Breast epithelium (tissue), 4 donors: ENCODE measurements at regions of chr12 and their contacts with region 1.

Region 1: DNA sequence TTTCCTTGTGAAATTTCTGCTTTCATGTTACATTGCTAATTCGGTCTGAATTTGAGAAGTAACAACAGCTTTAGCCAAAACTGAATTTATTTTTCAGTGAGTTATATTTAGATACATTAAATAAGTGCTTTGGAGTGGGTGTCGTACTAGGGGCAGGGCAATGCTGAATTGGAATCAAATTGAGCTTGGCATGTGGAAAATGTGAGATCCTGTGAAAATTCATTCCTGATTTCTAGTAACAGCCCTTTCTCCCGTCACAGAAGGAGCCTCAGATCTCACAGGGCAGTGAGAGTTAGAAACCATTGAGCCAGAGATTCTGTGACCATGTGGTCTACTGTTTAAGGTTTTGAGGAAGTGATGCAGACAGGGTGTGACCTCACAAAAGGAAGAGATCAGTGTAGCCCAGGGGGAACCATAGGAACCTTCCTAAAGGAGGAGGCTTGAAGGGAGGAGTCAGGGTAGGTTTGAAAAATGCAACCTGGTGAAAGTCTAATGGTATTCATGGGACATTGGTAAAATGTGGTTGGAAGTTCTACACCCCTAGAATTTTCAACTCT is 1136.8 kb downstream of the AACS start:
- DNase-seq: no peak
- H3K4me3 ChIP-seq: no peak overlapping the region
- H3K27ac ChIP-seq: no peak overlapping the region
- H3K4me1 ChIP-seq: no peaks in the 10 kb centered on the region
- H3K27me3 ChIP-seq: no peaks in the 10 kb centered on the region
- CTCF ChIP-seq: no peak
- POLR2A ChIP-seq: no peak

Region 2: DNA sequence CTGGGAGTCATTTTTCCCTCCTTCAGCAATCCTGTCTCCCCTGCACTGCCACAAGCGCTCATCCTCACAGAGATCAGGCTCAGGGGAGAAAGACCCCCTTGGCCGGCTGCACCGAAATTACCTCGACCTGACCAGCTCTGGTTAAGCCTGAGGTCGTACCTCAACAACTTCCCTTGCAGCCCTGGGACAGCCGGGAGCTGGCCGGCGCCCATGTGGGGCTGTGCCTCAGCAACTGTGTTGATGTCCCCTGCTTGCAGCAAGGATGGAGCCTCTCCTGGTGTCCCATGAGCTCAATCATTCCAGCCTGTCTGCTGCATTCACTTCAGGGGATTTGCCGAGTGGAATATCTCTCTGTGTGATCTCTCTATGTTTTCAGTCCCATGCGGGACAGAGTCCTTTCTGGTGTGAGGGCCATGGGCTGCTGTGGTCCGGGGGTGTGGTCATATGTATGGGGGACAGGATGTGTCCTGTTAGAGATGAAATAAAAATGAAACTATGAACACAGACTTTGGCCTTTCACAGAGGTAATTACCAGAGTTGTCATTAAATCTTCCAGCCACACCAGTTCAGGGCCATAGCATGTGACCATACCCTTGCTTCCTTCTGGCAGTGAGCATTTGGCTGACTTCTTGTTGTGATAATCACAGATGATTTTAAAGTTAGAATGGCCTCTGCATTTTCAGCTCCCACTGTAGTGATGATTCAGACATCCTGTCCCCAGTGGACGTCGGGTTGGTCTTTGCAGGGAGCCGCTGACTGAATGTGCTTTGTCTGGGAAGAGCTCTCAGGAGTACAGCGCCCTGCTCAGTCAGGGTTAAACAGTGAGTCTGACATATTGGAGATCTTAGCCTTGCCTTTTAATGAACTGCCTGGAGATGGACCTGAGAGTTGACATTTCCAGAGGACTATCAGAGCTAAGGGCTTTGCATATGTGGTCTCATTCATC is 730.9 kb before region 1 on chr12:
- intact Hi-C with region 1: loop called (anchors 5 kb)
- DNase-seq: no peak
- H3K4me3 ChIP-seq: no peak overlapping the region
- H3K27ac ChIP-seq: no peak overlapping the region
- H3K4me1 ChIP-seq: no peaks in the 10 kb centered on the region
- H3K27me3 ChIP-seq: no peaks in the 10 kb centered on the region
- CTCF ChIP-seq: no peak
- POLR2A ChIP-seq: no peak